ENCODE measurements at regions of chr11 and their contacts with region 1.

Region 1: DNA sequence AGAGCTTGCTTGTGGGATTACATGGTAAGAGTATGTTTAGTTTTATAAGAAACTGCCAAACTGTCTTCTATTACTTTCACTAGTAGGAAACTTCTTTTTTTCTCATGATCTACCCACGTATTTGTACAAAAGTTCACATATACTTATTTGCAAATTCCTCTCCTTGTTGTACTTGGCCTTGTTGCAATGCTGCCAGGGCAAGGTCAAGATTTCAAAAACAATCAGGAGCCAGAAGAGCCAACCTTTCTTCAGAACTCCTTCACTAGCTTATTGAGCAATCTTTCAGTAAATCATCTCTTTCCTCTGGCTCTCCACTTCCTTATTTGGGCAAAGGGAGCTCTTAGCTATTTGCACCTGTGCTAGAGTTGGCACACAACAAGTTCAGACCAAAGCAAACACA is 9.7 kb downstream of the SRSF8 start:
- DNase-seq: no peak
- ATAC-seq: no peak

Region 2: DNA sequence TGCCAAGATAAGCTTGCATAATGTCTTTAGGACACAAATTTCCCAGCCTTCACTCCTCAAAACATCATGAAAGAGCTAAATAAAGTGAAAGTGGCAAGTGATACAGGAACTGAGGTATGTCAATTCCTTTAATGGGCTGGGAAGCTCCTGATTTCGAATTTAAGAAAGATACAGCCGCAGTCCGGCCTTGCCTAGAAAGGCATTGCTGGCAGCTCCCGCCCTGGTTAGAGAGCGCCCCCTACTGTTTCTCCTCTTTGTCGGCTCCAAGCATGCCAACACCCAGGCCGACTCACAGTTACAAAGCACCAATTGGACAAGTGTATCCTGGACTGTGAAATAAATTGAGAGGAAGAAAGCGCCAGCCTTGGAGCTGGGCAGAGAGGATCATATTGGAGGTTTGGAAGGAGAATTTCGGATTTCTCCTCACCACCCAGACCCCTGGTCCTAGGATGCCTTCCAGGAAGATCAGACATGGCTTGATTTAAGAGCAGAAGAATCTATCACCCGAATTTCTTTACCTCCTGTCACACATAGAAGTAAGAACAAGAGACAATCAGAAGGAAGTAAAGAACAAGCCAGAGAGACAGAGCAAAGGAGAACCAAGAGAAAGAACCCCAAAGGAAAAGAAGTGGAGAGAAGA is 629.2 kb after region 1 on chr11:
- intact Hi-C with region 1: loop called (anchors 10 kb)
- DNase-seq: peak; percentile 87
- ATAC-seq: peak; percentile 99

Measured in Right ventricle myocardium superior (tissue), 1 donor.